ENCODE measurements at regions of chr17 and their contacts with region 1.

Region 1: GRCh38 chr17:77208217-77208808 is 67.5 kb downstream of the SEC14L1 start:
- DNase-seq: no peak
- H3K4me3 ChIP-seq: no peak overlapping the region
- H3K27ac ChIP-seq: peak overlapping the region in 1 of 2 donors; percentile 38
- H3K4me1 ChIP-seq: no peaks in the 10 kb centered on the region
- H3K27me3 ChIP-seq: no peaks in the 10 kb centered on the region
- CTCF ChIP-seq: peak; percentile 4 to 49 (median 18)

Region 2: DNA sequence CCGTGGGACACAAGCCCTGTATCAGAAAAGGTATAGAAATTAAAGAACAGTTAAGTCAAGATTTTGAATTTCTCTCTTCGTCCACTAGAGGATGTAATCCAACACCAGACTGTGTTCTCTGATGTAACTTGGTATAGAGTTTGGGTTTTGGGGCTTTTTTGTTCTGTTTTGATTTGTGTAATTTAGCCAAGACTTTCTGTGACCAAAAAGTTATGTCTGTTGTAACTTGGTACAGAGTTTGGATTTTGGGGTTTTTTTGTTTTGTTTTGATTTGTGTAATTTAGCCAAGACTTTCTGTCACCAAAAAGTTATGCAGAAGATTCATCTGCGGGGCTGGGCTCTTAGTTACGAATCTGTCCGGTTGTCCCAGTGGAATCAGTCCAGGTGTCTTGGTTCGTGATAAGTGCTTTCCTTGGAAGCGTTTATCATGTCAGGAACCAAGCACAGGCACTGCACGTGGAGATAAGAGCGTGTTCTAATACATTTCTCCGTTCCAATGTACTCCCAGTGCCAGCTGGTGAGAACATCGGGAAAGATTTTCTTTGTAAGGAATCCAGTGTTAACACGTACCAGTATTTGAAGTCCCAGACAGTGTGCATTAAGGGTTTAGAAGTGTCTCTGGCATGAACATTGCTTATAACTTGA is 111.6 kb before region 1 on chr17:
- intact Hi-C with region 1: loop called (anchors 1 kb)
- DNase-seq: no peak
- H3K4me3 ChIP-seq: peak overlapping the region in 1 of 2 donors; percentile 39
- H3K27ac ChIP-seq: peak overlapping the region; percentile 65 to 72
- H3K4me1 ChIP-seq: peaks cover 14 to 17% of the 10 kb centered on the region in 2 donors
- H3K27me3 ChIP-seq: no peaks in the 10 kb centered on the region
- CTCF ChIP-seq: peak; percentile 68 to 78 (median 78)

Region 3: DNA sequence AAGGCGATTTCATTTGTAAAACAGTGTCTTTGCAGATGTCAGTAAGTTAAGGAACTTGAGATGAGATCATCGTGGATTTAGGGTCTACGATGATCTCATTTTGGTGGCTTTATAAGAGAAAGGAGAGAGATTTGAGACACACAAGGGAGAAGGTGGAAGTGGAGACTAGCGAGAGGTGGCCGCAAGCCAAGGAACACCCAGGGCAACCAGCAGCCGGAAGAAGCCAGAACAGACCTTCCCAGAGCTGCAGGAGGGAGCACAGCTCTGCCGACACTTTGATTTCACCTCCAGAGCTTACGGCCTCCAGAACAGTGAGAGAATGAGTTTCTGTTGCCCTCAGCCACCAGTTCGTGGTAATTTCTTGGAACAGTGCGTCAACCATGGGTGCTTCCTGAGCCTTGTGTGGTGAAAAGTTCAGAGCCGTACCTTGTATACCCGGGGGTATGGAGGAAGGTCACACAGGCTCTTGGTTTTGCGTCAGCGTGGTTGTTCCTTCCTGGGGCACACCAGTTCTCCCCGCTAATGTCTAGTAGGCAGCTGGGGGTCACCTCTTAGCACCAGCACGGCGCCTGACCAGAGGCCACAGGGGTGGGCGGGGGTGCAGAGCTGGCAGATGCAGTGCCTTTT is 80.5 kb before region 1 on chr17:
- intact Hi-C with region 1: no loop called
- DNase-seq: peak; percentile 66 to 85
- H3K4me3 ChIP-seq: peak overlapping the region in 1 of 2 donors; percentile 3
- H3K27ac ChIP-seq: peak overlapping the region; percentile 2 to 70
- H3K4me1 ChIP-seq: peaks cover 0 to 16% of the 10 kb centered on the region in 2 donors
- H3K27me3 ChIP-seq: no peaks in the 10 kb centered on the region
- CTCF ChIP-seq: no peak

Region 4: DNA sequence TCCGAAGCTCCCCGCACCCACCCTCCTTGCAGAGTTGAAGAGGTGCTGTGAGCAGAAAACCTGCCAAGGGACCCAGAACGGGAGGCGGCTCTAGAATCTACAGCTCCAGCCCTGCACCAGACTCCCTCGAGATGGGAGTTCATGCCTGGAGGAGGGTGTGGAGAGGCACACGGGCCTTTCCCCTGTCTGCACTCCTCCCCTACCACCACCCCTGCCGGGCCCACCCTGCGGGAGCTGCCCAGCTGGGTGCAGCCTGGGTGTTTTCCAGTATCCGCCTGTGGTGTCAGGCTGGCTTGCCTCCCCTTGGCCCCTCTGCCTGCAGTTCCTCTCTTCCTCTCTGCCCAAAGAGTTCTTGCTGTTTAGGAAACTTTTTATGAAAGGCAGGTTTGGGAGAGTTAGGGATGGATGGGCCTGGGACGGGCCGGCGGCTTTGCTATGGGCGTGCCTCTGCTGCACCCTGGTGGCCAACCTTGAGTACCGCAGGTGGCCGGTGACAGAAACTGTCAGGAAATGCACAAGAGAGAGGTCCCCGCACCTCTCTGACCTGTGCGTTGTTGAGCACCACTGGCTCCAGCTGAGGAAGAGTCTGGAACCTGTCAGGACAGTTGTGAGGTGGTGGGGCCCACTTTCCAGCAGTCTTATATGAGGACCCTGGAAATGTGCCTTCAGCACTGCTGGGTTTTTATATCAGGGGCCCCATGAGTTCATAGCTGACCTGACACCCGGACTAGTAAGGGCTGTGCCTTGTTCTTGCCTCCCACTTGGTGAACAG is 286.5 kb after region 1 on chr17:
- intact Hi-C with region 1: no loop called
- DNase-seq: peak in 1 of 2 donors; percentile 88
- H3K4me3 ChIP-seq: no peak overlapping the region
- H3K27ac ChIP-seq: peak overlapping the region in 1 of 2 donors; percentile 5
- H3K4me1 ChIP-seq: peaks cover 7 to 12% of the 10 kb centered on the region in 2 donors
- H3K27me3 ChIP-seq: no peaks in the 10 kb centered on the region
- CTCF ChIP-seq: peak; percentile 95 to 99 (median 96)

Region 5: GRCh38 chr17:77609553-77610517 is 401.5 kb after region 1 on chr17:
- intact Hi-C with region 1: no loop called
- DNase-seq: peak in 1 of 2 donors; percentile 68
- H3K4me3 ChIP-seq: peak overlapping the region; percentile 2 to 43
- H3K27ac ChIP-seq: peak overlapping the region; percentile 16 to 19
- H3K4me1 ChIP-seq: peaks cover 0 to 7% of the 10 kb centered on the region in 2 donors
- H3K27me3 ChIP-seq: no peaks in the 10 kb centered on the region
- CTCF ChIP-seq: no peak